ENCODE measurements at regions of chr1 and their contacts with region 1.

Region 1: GRCh38 chr1:58304346-58304975 is 242.1 kb downstream of the OMA1 start:
- DNase-seq: no peak
- H3K4me3 Mint-ChIP-seq: no peak overlapping the region
- H3K27ac Mint-ChIP-seq: no peak overlapping the region
- H3K4me1 Mint-ChIP-seq: no peaks in the 10 kb centered on the region
- H3K27me3 Mint-ChIP-seq: peaks cover 49% of the 10 kb centered on the region
- CTCF ChIP-seq: no peak

Region 2: GRCh38 chr1:58089898-58090534 is 214.4 kb before region 1 on chr1:
- CTCF ChIA-PET with region 1: no interaction called
- intact Hi-C with region 1: no loop called
- DNase-seq: no peak
- H3K4me3 Mint-ChIP-seq: no peak overlapping the region
- H3K27ac Mint-ChIP-seq: no peak overlapping the region
- H3K4me1 Mint-ChIP-seq: no peaks in the 10 kb centered on the region
- H3K27me3 Mint-ChIP-seq: no peaks in the 10 kb centered on the region
- CTCF ChIP-seq: no peak

Region 3: GRCh38 chr1:58345215-58346035 is 41.0 kb after region 1 on chr1:
- CTCF ChIA-PET with region 1: no interaction called
- intact Hi-C with region 1: loop called (anchors 1 kb)
- DNase-seq: no peak
- H3K4me3 Mint-ChIP-seq: no peak overlapping the region
- H3K27ac Mint-ChIP-seq: no peak overlapping the region
- H3K4me1 Mint-ChIP-seq: no peaks in the 10 kb centered on the region
- H3K27me3 Mint-ChIP-seq: peaks cover 20% of the 10 kb centered on the region
- CTCF ChIP-seq: no peak